Head of caudate nucleus (tissue), 42 donors: ENCODE measurements at regions of chr20 and their contacts with region 1.

Region 1: DNA sequence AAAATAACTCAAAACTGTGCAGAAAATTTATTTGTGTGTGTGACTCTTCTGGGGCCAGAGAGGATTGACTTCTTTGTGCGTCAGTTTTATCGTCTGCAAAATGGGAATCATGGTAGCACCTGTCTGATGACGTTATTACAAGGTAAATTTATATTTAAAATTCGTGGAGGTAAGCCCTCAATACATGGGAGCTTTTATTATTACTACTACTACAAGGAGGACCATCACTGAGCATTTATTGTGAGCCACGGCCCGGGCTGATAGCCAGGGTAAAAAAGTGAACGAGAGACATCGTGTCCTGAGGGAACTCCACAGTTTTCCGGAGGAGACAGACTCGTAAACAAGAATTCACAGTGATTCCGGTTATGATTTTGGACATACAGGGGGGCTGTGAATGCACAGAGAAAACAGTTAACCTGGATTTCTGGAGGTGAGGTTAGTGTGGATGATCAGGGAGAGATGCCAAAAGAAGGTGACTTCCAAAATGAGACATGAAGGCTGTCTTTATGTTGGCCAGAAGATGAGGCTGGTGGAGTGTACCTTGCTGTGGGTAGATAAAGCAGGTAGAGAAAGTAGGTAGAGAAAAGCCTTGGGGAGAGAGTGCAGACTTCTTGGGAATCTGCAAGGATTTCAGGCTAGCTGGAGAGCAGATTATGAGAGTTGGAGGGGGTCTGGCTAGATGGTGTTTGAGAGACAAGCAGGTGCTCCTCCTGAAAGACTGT is 10.6 kb upstream of the SERINC3 start:
- DNase-seq: peak in 4 of 42 donors; percentile 7 to 51 (median 22)

Region 2: DNA sequence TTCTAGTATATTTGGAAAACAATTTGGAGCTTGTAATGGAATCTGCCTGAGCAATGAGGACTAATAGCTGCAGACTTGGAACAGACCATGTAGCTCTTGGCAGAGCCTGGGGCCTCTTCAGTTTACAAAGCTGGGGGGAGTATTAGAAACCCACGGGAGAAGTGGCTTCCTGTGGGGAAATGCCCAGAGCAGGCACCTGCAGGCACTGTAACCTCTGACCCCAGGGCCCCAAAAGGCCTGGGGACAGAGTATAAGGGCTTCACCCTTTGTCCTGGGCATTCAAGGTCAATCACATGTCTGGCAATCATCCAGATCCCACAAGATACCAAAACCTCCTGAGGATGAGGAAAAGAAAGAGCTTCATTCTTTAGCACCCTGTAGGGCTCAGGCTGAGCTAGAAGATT is 69.4 kb after region 1 on chr20:
- intact Hi-C with region 1: loop called (anchors 5 kb)
- DNase-seq: peak in 16 of 42 donors; percentile 16 to 66 (median 39)